OCI-LY7 (cell line): ENCODE measurements at regions of chr1 and their contacts with region 1.

Region 1: GRCh38 chr1:33181921-33182341 is at the start of gene TRIM62:
- DNase-seq: peak; percentile 88
- H3K4me3 ChIP-seq: peak within 1 kb of the TSS; percentile 74
- H3K27ac ChIP-seq: peak within 1 kb of the TSS; percentile 18
- H3K4me1 ChIP-seq: peaks cover 21% of the 10 kb centered on the region
- CTCF ChIP-seq: no peak
- total RNA-seq, gene TRIM62: 2.0 and 2.4 TPM in 2 replicates

Region 2: GRCh38 chr1:33244143-33244820 is 62.4 kb after region 1 on chr1:
- CTCF ChIA-PET with region 1: no interaction called
- POLR2A ChIA-PET with region 1: no interaction called
- intact Hi-C with region 1: no loop called
- DNase-seq: no peak
- H3K4me3 ChIP-seq: no peak overlapping the region
- H3K27ac ChIP-seq: no peak overlapping the region
- H3K4me1 ChIP-seq: no peaks in the 10 kb centered on the region
- CTCF ChIP-seq: no peak

Region 3: GRCh38 chr1:33256701-33257399 is 74.9 kb after region 1 on chr1:
- CTCF ChIA-PET with region 1: interaction called, 3 read pairs
- POLR2A ChIA-PET with region 1: interaction called, 8 read pairs
- intact Hi-C with region 1: loop called (anchors 2 kb)
- DNase-seq: peak; percentile 75
- H3K4me3 ChIP-seq: peak overlapping the region; percentile 73
- H3K27ac ChIP-seq: peak overlapping the region; percentile 73
- H3K4me1 ChIP-seq: peaks cover 27% of the 10 kb centered on the region
- CTCF ChIP-seq: no peak